Activated CD4-positive, alpha-beta T cell treated with anti-CD3 and anti-CD28 coated beads, Interleukin-2, amount 10 ng/mL, durations not matched to agents 7 days and 5 days (primary cell): ENCODE measurements at regions of chr3 and their contacts with region 1.

Region 1: GRCh38 chr3:32438596-32439344 is 47.1 kb downstream of the CMTM7 start:
- DNase-seq: no peak
- H3K4me3 Mint-ChIP-seq: no peak overlapping the region
- H3K27ac Mint-ChIP-seq: peak overlapping the region; percentile 68
- H3K4me1 Mint-ChIP-seq: peaks cover 81% of the 10 kb centered on the region
- H3K27me3 Mint-ChIP-seq: no peaks in the 10 kb centered on the region

Region 2: DNA sequence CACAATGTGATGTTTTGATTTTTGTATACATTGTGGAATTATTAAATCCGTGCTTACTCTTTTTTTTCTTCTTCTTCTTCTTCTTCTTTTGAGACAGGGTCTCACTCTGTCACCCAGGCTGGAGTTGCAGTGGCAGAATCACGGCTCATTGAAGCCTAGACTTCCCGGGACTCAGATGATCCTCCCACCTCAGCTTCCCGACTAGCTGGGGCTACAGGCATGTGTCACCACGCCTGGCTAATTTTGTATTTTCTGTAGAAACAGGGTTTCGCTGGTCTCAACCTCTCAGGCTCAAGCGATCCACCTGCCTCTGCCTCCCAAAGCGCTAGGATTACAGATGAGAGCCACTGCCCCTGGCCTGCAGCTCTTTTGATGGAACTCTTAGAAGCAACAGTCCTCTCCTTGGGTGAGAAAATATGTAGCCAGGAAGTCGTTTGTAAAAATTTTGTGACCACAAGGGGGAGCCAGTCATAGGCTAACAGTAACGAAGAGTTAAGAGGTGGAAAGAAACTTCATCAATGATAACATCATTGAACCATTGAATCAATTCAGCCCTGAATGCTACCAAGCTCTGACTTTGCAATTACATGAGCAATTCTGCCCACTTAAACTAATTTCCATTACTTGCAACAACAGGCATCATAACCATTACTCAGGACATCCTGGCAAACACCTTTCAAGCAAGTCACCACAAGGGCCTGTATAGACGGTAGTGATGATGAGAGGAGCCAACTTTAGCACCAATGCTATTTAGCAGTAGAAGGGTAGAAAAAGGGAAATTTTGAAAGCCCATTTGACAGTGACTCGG is 63.8 kb before region 1 on chr3:
- CTCF ChIA-PET with region 1: no interaction called
- POLR2A ChIA-PET with region 1: no interaction called
- DNase-seq: peak; percentile 86
- H3K4me3 Mint-ChIP-seq: no peak overlapping the region
- H3K27ac Mint-ChIP-seq: no peak overlapping the region
- H3K4me1 Mint-ChIP-seq: peaks cover 32% of the 10 kb centered on the region
- H3K27me3 Mint-ChIP-seq: no peaks in the 10 kb centered on the region

Region 3: GRCh38 chr3:32448686-32449474 is 10.1 kb after region 1 on chr3:
- CTCF ChIA-PET with region 1: interaction called, 25 read pairs
- POLR2A ChIA-PET with region 1: no interaction called
- DNase-seq: no peak
- H3K4me3 Mint-ChIP-seq: no peak overlapping the region
- H3K27ac Mint-ChIP-seq: peak overlapping the region; percentile 71
- H3K4me1 Mint-ChIP-seq: peaks cover 35% of the 10 kb centered on the region
- H3K27me3 Mint-ChIP-seq: no peaks in the 10 kb centered on the region

Region 4: DNA sequence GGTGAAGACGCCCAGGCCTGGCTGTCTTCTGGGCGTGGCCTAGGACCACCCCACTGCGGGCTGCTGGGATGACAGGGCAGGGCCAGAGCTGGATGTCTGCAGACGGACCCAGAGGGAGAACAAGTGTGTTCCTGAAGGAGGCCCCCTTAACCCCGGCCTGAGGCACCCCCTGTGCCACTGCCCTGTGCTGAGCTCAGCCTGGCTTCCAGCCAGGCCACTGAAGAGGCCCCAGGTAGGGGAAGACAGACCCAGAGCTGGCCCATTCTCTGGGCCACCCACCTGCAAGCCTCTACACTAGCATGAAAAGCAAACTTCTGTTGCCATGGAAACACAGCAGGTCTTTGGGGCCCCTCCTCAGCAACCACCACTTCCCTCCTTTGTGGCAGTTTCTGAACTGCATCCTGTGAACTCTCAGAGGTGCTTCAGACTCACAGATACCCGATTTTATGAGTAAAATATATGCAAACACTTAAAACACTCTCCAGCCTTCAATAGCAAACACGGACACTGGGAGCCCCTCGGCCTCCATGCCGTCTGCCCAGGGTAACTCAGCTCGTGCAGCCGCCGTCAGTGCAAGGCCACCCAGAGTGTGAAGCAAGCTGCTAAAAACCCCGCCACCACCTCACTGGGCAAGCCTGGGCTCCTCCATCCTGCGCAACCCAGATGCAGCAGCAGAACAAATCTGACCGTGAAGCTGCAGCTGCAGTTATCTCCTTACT is 21.4 kb after region 1 on chr3:
- CTCF ChIA-PET with region 1: interaction called, 25 read pairs
- POLR2A ChIA-PET with region 1: no interaction called
- DNase-seq: peak; percentile 93
- H3K4me3 Mint-ChIP-seq: peak overlapping the region; percentile 33
- H3K27ac Mint-ChIP-seq: no peak overlapping the region
- H3K4me1 Mint-ChIP-seq: peaks cover 31% of the 10 kb centered on the region
- H3K27me3 Mint-ChIP-seq: no peaks in the 10 kb centered on the region